Mammary epithelial cell (primary cell): ENCODE measurements at regions of chr13 and their contacts with region 1.

Region 1: GRCh38 chr13:46126552-46127357 is 21.9 kb upstream of the CPB2 start:
- DNase-seq: peak; percentile 74
- H3K4me3 ChIP-seq: no peak overlapping the region
- H3K27ac ChIP-seq: no peak overlapping the region
- H3K4me1 ChIP-seq: peaks cover 6% of the 10 kb centered on the region
- H3K27me3 ChIP-seq: no peaks in the 10 kb centered on the region
- CTCF ChIP-seq: peak; percentile 98

Region 2: GRCh38 chr13:45925151-45925550 is 201.6 kb before region 1 on chr13:
- CTCF ChIA-PET with region 1: no interaction called
- dilution Hi-C with region 1: no loop called
- in situ Hi-C with region 1: no loop called
- intact Hi-C with region 1: loop called (anchors 10 kb)
- DNase-seq: no peak
- H3K4me3 ChIP-seq: no peak overlapping the region
- H3K27ac ChIP-seq: no peak overlapping the region
- H3K4me1 ChIP-seq: no peaks in the 10 kb centered on the region
- H3K27me3 ChIP-seq: no peaks in the 10 kb centered on the region
- CTCF ChIP-seq: peak in 1 of 2 donors; percentile 16

Region 3: GRCh38 chr13:46010148-46010547 is 116.6 kb before region 1 on chr13:
- CTCF ChIA-PET with region 1: no interaction called
- dilution Hi-C with region 1: no loop called
- in situ Hi-C with region 1: no loop called
- intact Hi-C with region 1: loop called (anchors 10 kb)
- DNase-seq: no peak
- H3K4me3 ChIP-seq: no peak overlapping the region
- H3K27ac ChIP-seq: no peak overlapping the region
- H3K4me1 ChIP-seq: peaks cover 4% of the 10 kb centered on the region
- H3K27me3 ChIP-seq: no peaks in the 10 kb centered on the region
- CTCF ChIP-seq: peak; percentile 18 to 47